ENCODE measurements at regions of chr20 and their contacts with region 1.

Region 1: GRCh38 chr20:44909872-44910689 is at the start of gene PABPC1L:
- DNase-seq: peak; percentile 88 to 97 (median 96)
- ATAC-seq: peak; percentile 93
- H3K4me3 ChIP-seq: peak within 1 kb of the TSS; percentile 56
- H3K27ac ChIP-seq: peak within 1 kb of the TSS; percentile 80
- H3K4me1 ChIP-seq: peaks cover 14 to 24% of the 10 kb centered on the region in 2 experiments
- H3K27me3 ChIP-seq: no peaks in the 10 kb centered on the region
- CTCF ChIP-seq: no peak
- EP300 ChIP-seq: no peak
- POLR2A ChIP-seq: peak; percentile 86
- RAD21 ChIP-seq: no peak
- polyA plus RNA-seq, gene PABPC1L: 6.0 to 7.2 TPM

Region 2: DNA sequence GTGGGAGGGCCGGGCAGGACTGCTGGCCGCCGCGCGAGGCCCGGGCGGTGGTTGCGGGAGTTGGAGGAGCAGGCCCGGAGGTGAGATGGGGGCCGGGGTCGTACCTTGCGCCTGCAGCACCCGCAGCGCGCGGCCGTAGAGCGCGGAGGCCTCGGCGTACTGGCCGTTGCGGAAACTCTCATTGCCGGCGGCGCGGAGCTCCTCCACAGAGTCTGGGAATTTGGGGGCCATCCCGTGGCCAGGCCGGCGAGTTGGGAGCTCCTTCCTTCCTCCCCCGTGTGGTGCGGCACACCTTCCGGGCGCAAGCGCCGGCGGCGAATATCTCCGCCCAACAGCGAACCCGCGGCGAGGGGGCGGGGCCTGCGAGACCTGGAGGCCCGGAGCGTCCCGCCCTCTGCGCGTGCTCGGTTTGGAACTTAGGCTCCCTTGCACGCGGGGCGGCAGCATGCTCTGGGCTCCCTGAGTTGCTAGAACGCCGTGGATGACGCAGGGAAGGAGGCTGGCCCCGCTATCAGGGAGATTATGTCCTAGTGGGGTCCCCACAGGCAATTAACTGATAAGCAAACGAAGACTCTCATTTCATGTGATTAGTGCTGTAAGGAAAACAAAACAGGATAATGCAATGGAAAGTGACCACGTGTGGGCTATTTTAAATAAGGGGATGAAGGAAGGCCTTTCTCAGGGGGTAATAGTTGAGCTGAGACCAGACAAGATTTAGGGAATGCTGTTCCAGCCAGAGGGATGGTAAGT is 50.2 kb after region 1 on chr20 and contains the start of gene TOMM34:
- CTCF ChIA-PET with region 1: no interaction called
- POLR2A ChIA-PET with region 1: interaction called, 3 read pairs
- in situ Hi-C with region 1: no loop called
- intact Hi-C with region 1: loop called (anchors 2 kb)
- DNase-seq: peak; percentile 96 to 98 (median 98)
- ATAC-seq: peak; percentile 97
- H3K4me3 ChIP-seq: peak within 1 kb of the TSS; percentile 64
- H3K27ac ChIP-seq: peak within 1 kb of the TSS; percentile 81
- H3K4me1 ChIP-seq: peaks cover 23 to 43% of the 10 kb centered on the region in 2 experiments
- H3K27me3 ChIP-seq: no peaks in the 10 kb centered on the region
- CTCF ChIP-seq: no peak; a peak in 1 of 6 replicates
- EP300 ChIP-seq: no peak
- POLR2A ChIP-seq: peak; percentile 90
- RAD21 ChIP-seq: no peak
- polyA plus RNA-seq, gene TOMM34: 18.1 to 32.6 TPM

Measured in K562 (cell line).